ENCODE measurements at regions of chr21 and their contacts with region 1.

Region 1: DNA sequence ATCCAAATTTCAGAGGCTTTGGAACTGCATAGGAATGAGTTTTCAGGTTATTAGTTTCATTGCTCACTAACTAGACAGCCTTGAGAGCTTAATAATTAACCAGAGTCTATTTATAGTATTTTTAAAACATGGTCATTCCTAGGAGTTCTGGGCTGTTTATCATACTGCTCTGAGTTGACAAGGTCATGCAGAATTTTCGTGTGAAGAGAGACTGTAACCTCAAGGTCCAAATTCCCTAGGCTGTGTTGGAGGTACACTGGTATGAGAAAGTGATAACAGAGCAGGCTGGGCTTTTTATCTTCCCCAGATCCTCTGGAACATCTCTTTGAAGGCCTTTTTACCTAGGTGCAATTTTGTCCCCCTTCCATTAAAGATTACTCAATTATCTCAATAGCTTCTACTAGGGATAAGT is 736.3 kb downstream of the LTN1 start:
- DNase-seq: peak; percentile 79 to 86
- H3K4me3 ChIP-seq: no peak overlapping the region
- H3K4me3 Mint-ChIP-seq: peak overlapping the region; percentile 53
- H3K27ac Mint-ChIP-seq: peak overlapping the region; percentile 69
- H3K4me1 ChIP-seq: peaks cover 44% of the 10 kb centered on the region
- H3K4me1 Mint-ChIP-seq: peaks cover 44% of the 10 kb centered on the region
- H3K27me3 ChIP-seq: no peaks in the 10 kb centered on the region
- H3K27me3 Mint-ChIP-seq: no peaks in the 10 kb centered on the region
- CTCF ChIP-seq: no peak

Region 2: DNA sequence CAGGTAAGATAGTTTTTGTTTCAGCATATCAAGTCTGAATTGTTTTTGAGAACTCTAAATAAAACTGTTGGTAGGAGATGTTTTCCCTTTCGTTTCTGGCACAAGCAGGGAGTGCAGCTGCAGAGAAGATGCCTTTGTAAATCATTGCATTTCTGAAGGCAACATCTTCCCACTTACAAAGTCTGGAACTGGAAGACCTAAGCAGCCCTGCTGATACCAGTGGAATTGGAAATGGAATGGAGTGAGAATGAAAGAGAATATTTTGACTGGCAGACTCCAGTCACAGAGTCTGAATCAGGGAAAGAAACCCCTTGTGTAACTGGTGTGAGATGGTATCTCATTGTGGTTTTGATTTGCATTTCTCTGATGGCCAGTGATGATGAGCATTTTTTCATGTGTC is 79.3 kb before region 1 on chr21:
- CTCF ChIA-PET with region 1: no interaction called
- POLR2A ChIA-PET with region 1: no interaction called
- intact Hi-C with region 1: no loop called
- DNase-seq: no peak
- H3K4me3 ChIP-seq: no peak overlapping the region
- H3K4me3 Mint-ChIP-seq: no peak overlapping the region
- H3K27ac Mint-ChIP-seq: no peak overlapping the region
- H3K4me1 ChIP-seq: no peaks in the 10 kb centered on the region
- H3K4me1 Mint-ChIP-seq: no peaks in the 10 kb centered on the region
- H3K27me3 ChIP-seq: no peaks in the 10 kb centered on the region
- H3K27me3 Mint-ChIP-seq: no peaks in the 10 kb centered on the region
- CTCF ChIP-seq: no peak

Region 3: GRCh38 chr21:28239340-28239739 is 17.1 kb before region 1 on chr21:
- CTCF ChIA-PET with region 1: no interaction called
- POLR2A ChIA-PET with region 1: no interaction called
- intact Hi-C with region 1: loop called (anchors 2 kb)
- DNase-seq: no peak
- H3K4me3 ChIP-seq: no peak overlapping the region
- H3K4me3 Mint-ChIP-seq: no peak overlapping the region
- H3K27ac Mint-ChIP-seq: no peak overlapping the region
- H3K4me1 ChIP-seq: peaks cover 46% of the 10 kb centered on the region
- H3K4me1 Mint-ChIP-seq: peaks cover 26% of the 10 kb centered on the region
- H3K27me3 ChIP-seq: no peaks in the 10 kb centered on the region
- H3K27me3 Mint-ChIP-seq: no peaks in the 10 kb centered on the region
- CTCF ChIP-seq: no peak

Measured in Caco-2 (cell line).